Activated CD4-positive, alpha-beta T cell treated with anti-CD3 and anti-CD28 coated beads for 36 hours (primary cell): ENCODE measurements at regions of chr18 and their contacts with region 1.

Region 1: GRCh38 chr18:47254341-47254939 is 3.0 kb upstream of the SKOR2 start:
- DNase-seq: peak; percentile 70
- ATAC-seq: no peak
- H3K4me3 Mint-ChIP-seq: no peak overlapping the region
- H3K27ac Mint-ChIP-seq: no peak overlapping the region
- H3K4me1 Mint-ChIP-seq: peaks cover 7% of the 10 kb centered on the region
- H3K27me3 Mint-ChIP-seq: peaks cover 76% of the 10 kb centered on the region

Region 2: DNA sequence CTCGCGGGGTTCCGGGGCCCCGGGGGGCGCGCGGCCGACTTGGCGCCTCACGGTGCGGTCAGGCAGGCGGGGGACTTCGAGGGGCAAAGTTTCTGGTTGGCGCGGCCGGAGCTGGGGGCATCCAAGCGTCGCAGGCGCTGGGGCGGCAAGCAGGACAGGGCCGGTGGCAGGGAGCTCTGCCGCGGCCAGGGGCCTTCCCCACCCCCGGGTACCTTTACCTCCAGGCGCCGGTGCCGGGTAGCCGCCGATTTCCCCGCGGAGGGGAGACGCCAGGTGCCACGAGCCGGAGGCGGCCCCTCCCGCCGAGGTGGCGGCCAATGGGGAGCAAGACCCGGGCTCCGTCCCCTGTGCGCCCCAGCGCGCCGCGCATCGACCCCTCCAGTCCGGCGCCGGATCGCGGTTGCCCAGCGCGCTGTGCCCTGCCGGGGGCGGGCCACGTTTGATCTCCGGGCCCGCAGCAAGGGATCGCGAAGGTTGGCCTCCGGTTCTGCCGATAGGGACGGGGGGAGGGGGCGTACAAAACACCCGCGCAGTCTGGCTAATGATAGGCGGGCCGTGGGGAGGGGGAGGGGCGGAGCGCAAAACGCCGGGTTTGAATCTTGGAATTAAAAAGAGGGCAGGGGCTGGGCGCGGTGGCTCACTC is 497.8 kb before region 1 on chr18 and contains the start of gene ST8SIA5:
- CTCF ChIA-PET with region 1: no interaction called
- POLR2A ChIA-PET with region 1: no interaction called
- intact Hi-C with region 1: loop called in 1 of 2 experiments (anchors 5 kb)
- DNase-seq: peak; percentile 37
- ATAC-seq: peak; percentile 30
- H3K4me3 Mint-ChIP-seq: peak within 1 kb of the TSS; percentile 53
- H3K27ac Mint-ChIP-seq: no peak within 1 kb of the TSS
- H3K4me1 Mint-ChIP-seq: peaks cover 6% of the 10 kb centered on the region
- H3K27me3 Mint-ChIP-seq: peaks cover 54% of the 10 kb centered on the region
- total RNA-seq, gene ST8SIA5: not detected

Region 3: DNA sequence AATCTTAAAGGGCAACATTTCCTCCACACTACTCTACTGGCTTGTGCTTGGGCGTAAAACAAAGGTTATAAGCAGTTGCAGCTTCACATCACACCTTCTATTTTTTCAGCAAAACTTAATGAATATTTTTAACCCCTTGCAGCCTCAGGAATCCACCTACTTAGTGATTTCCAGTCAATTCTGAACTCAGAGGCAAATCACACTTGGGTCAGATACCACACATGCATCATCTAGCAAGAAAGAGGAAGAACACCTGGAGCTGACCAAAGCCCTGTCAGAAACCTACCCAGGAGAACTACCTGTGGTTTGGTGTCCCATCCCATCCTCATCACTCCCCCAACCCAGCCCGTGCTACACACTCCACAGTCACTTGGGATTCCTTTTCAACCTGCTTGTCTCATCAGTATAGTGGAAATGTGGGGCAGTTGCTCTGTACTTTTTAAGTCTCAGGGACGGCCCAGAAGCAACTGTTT is 362.7 kb before region 1 on chr18:
- CTCF ChIA-PET with region 1: no interaction called
- POLR2A ChIA-PET with region 1: no interaction called
- intact Hi-C with region 1: no loop called
- DNase-seq: peak; percentile 32
- ATAC-seq: peak; percentile 90
- H3K4me3 Mint-ChIP-seq: no peak overlapping the region
- H3K27ac Mint-ChIP-seq: peak overlapping the region; percentile 2
- H3K4me1 Mint-ChIP-seq: peaks cover 36% of the 10 kb centered on the region
- H3K27me3 Mint-ChIP-seq: no peaks in the 10 kb centered on the region

Region 4: GRCh38 chr18:47040982-47041381 is 213.5 kb before region 1 on chr18:
- CTCF ChIA-PET with region 1: no interaction called
- POLR2A ChIA-PET with region 1: no interaction called
- intact Hi-C with region 1: no loop called
- DNase-seq: no peak
- ATAC-seq: no peak
- H3K4me3 Mint-ChIP-seq: no peak overlapping the region
- H3K27ac Mint-ChIP-seq: no peak overlapping the region
- H3K4me1 Mint-ChIP-seq: no peaks in the 10 kb centered on the region
- H3K27me3 Mint-ChIP-seq: peaks cover 3% of the 10 kb centered on the region